ENCODE measurements at regions of chr5 and their contacts with region 1.

Region 1: DNA sequence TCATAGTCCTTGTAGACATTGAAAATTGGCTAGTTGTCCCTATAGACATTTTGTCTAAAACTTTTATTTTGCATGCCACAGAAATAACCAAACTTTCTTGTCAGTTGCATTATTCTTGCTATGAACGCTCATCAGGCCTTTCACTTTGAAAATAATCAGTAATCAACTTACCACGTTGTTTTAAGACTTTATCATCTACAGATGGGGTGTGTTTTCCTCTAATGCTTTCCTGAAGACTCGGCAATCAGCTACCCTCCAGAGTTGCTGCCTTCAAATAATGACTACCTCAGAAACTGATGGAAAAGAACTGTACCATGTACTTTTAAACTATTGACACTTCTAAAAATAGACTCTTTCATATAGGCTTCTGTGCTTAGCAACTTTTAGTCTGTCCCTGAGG is 33.5 kb upstream of the HSPB3 start:
- DNase-seq: no peak
- H3K4me3 ChIP-seq: no peak overlapping the region
- H3K27ac ChIP-seq: no peak overlapping the region
- H3K4me1 ChIP-seq: no peaks in the 10 kb centered on the region
- H3K27me3 ChIP-seq: no peaks in the 10 kb centered on the region
- CTCF ChIP-seq: no peak
- EP300 ChIP-seq: no peak
- POLR2A ChIP-seq: no peak

Region 2: DNA sequence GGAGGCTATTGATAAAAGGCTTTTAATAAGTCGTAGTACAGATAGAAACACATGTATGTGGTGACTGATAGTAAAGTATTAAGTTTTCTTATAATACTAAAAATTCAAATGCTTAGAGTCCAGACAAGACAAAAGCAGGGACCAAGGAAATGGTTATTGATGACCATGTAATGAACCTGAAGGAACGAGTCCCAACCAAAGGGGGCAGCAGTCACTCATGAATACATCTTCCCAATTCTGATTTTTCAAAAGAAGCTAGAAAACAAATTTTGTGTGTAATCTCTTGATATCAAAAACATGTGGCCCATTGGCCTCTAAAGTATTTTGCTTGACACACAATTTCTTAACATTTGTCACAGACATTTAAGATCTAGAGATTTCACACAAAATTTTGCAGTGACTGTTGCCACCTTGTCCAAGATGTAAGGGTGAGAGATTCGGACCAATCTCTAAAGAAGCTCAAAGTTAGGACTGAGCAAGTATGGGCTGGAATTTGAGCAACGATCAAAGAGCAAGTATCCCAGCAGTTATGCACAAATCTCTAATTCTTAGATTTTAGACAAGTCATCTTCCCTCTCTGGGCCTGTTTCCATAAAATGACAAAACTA is 178.4 kb before region 1 on chr5:
- in situ Hi-C with region 1: loop called in 1 of 4 experiments (anchors 10 kb)
- intact Hi-C with region 1: loop called (anchors 10 kb)
- DNase-seq: peak; percentile 28
- H3K4me3 ChIP-seq: no peak overlapping the region
- H3K27ac ChIP-seq: no peak overlapping the region
- H3K4me1 ChIP-seq: no peaks in the 10 kb centered on the region
- H3K27me3 ChIP-seq: no peaks in the 10 kb centered on the region
- CTCF ChIP-seq: peak; percentile 59 to 79 (median 65)
- EP300 ChIP-seq: no peak
- POLR2A ChIP-seq: no peak

Measured in transverse colon (tissue), 4 donors.